Endothelial cell of umbilical vein (primary cell): ENCODE measurements at regions of chr17 and their contacts with region 1.

Region 1: GRCh38 chr17:67376737-67377487 is at the start of gene PITPNC1:
- DNase-seq: peak; percentile 89
- H3K4me3 ChIP-seq: peak within 1 kb of the TSS; percentile 56 to 87 (median 85)
- H3K27ac ChIP-seq: peak within 1 kb of the TSS; percentile 82
- H3K4me1 ChIP-seq: peaks cover 14% of the 10 kb centered on the region
- H3K27me3 ChIP-seq: no peaks in the 10 kb centered on the region
- CTCF ChIP-seq: no peak
- POLR2A ChIP-seq: peak; percentile 23
- total RNA-seq, gene PITPNC1: 9.6 and 10.5 TPM in 2 replicates

Region 2: GRCh38 chr17:66985338-66986237 is 391.3 kb before region 1 on chr17:
- CTCF ChIA-PET with region 1: no interaction called
- POLR2A ChIA-PET with region 1: no interaction called
- dilution Hi-C with region 1: no loop called
- intact Hi-C with region 1: no loop called
- DNase-seq: no peak
- H3K4me3 ChIP-seq: no peak overlapping the region
- H3K27ac ChIP-seq: no peak overlapping the region
- H3K4me1 ChIP-seq: no peaks in the 10 kb centered on the region
- H3K27me3 ChIP-seq: peaks cover 11 to 16% of the 10 kb centered on the region in 2 experiments
- CTCF ChIP-seq: no peak
- POLR2A ChIP-seq: no peak

Region 3: GRCh38 chr17:67221062-67221998 is 155.6 kb before region 1 on chr17:
- CTCF ChIA-PET with region 1: no interaction called
- POLR2A ChIA-PET with region 1: no interaction called
- dilution Hi-C with region 1: no loop called
- intact Hi-C with region 1: loop called (anchors 2 kb)
- DNase-seq: peak; percentile 63
- H3K4me3 ChIP-seq: no peak overlapping the region
- H3K27ac ChIP-seq: no peak overlapping the region
- H3K4me1 ChIP-seq: peaks cover 16% of the 10 kb centered on the region
- H3K27me3 ChIP-seq: no peaks in the 10 kb centered on the region
- CTCF ChIP-seq: peak; percentile 48 to 65
- POLR2A ChIP-seq: no peak

Region 4: DNA sequence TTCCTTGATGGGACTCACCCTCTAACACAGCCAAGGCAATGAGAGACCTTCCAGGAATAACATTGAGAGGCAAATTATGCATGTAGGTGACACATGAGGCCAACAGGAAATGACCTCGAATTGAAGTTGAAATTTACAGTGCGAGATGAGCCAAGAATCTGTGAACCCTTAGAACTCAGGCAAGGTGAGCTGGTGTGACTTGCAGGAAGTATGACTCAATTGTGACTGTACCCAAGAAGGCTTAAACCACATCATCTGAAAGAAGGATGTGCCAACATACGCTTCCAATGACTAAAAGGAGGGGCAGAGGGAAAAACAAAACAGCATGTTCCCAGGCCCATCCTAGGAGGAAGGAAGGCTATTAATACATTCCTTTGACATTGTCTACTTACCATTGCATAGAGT is 45.0 kb after region 1 on chr17:
- CTCF ChIA-PET with region 1: interaction called, 3 read pairs
- POLR2A ChIA-PET with region 1: no interaction called
- dilution Hi-C with region 1: no loop called
- intact Hi-C with region 1: loop called (anchors 2 kb)
- DNase-seq: peak; percentile 81
- H3K4me3 ChIP-seq: no peak overlapping the region
- H3K27ac ChIP-seq: peak overlapping the region; percentile 59
- H3K4me1 ChIP-seq: peaks cover 17% of the 10 kb centered on the region
- H3K27me3 ChIP-seq: no peaks in the 10 kb centered on the region
- CTCF ChIP-seq: no peak
- POLR2A ChIP-seq: no peak

Region 5: DNA sequence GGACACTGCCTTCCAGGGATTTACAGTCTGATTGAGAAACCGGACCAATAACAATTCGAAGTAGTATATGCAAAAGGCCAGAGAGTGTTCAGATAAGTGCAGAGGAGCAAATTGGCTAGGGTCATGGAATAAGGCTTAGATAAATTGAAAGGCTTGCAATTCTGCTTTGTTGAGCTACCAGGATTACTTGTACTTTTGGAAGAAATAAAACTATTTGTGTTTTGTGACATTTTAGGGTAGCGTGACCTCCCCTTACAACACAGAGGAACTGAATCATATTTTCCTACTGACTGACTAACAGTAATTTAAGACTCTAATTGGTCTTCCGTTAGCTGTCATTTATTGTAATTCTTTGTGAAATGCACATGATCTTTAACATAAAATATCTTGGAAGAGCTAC is 104.9 kb after region 1 on chr17:
- CTCF ChIA-PET with region 1: interaction called, 295 read pairs
- POLR2A ChIA-PET with region 1: no interaction called
- dilution Hi-C with region 1: no loop called
- intact Hi-C with region 1: no loop called
- DNase-seq: peak; percentile 75
- H3K4me3 ChIP-seq: peak overlapping the region in 1 of 3 experiments; percentile 20
- H3K27ac ChIP-seq: peak overlapping the region; percentile 32
- H3K4me1 ChIP-seq: peaks cover 18% of the 10 kb centered on the region
- H3K27me3 ChIP-seq: no peaks in the 10 kb centered on the region
- CTCF ChIP-seq: no peak
- POLR2A ChIP-seq: no peak

Region 6: GRCh38 chr17:67602956-67603355 is 226.0 kb after region 1 on chr17:
- CTCF ChIA-PET with region 1: interaction called, 68 read pairs
- POLR2A ChIA-PET with region 1: no interaction called
- dilution Hi-C with region 1: no loop called
- intact Hi-C with region 1: loop called (anchors 1 kb)
- DNase-seq: peak; percentile 32
- H3K4me3 ChIP-seq: no peak overlapping the region
- H3K27ac ChIP-seq: no peak overlapping the region
- H3K4me1 ChIP-seq: peaks cover 3% of the 10 kb centered on the region
- H3K27me3 ChIP-seq: peaks cover 0 to 7% of the 10 kb centered on the region in 2 experiments
- CTCF ChIP-seq: peak; percentile 19 to 41
- POLR2A ChIP-seq: no peak

Region 7: GRCh38 chr17:67696853-67697505 is 320.1 kb after region 1 on chr17:
- CTCF ChIA-PET with region 1: interaction called, 13 read pairs
- POLR2A ChIA-PET with region 1: no interaction called
- dilution Hi-C with region 1: no loop called
- intact Hi-C with region 1: no loop called
- DNase-seq: no peak
- H3K4me3 ChIP-seq: no peak overlapping the region
- H3K27ac ChIP-seq: no peak overlapping the region
- H3K4me1 ChIP-seq: no peaks in the 10 kb centered on the region
- H3K27me3 ChIP-seq: no peaks in the 10 kb centered on the region
- CTCF ChIP-seq: no peak
- POLR2A ChIP-seq: no peak